PC-3 (cell line): ENCODE measurements at regions of chr3 and their contacts with region 1.

Region 1: DNA sequence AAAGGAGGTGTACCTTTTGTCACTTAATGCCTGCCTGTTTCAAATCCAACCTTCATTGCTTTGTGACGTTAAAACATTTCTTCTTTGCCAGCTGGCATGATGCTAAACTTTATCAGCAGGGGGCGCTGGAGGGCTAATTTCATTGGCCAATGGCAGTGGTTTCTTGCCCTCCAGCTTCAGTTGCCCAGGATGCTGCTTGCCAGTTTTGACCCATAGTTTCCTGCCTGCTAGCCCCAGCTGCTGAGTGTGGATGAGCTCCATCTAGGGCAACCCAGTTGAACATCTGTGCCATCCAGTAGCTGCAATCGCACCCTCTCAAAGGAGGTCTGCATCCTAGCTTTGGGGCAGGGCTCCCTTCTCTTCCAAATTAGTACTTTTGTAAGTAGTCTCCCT is 22.1 kb downstream of the ACKR2 start:
- DNase-seq: peak; percentile 85
- ATAC-seq: no peak; the same call in 1 of the 2 replicates
- H3K4me3 ChIP-seq: no peak overlapping the region
- H3K27ac ChIP-seq: no peak overlapping the region
- H3K4me1 ChIP-seq: peaks cover 43% of the 10 kb centered on the region
- H3K27me3 ChIP-seq: no peaks in the 10 kb centered on the region
- CTCF ChIP-seq: peak; percentile 91

Region 2: GRCh38 chr3:42652611-42653302 is 178.6 kb before region 1 on chr3:
- CTCF ChIA-PET with region 1: interaction called, 3 read pairs
- POLR2A ChIA-PET with region 1: no interaction called
- intact Hi-C with region 1: loop called (anchors 2 kb)
- DNase-seq: peak; percentile 90
- ATAC-seq: peak; percentile 75
- H3K4me3 ChIP-seq: peak overlapping the region; percentile 85
- H3K27ac ChIP-seq: peak overlapping the region; percentile 53
- H3K4me1 ChIP-seq: peaks cover 28% of the 10 kb centered on the region
- H3K27me3 ChIP-seq: no peaks in the 10 kb centered on the region
- CTCF ChIP-seq: no peak

Region 3: DNA sequence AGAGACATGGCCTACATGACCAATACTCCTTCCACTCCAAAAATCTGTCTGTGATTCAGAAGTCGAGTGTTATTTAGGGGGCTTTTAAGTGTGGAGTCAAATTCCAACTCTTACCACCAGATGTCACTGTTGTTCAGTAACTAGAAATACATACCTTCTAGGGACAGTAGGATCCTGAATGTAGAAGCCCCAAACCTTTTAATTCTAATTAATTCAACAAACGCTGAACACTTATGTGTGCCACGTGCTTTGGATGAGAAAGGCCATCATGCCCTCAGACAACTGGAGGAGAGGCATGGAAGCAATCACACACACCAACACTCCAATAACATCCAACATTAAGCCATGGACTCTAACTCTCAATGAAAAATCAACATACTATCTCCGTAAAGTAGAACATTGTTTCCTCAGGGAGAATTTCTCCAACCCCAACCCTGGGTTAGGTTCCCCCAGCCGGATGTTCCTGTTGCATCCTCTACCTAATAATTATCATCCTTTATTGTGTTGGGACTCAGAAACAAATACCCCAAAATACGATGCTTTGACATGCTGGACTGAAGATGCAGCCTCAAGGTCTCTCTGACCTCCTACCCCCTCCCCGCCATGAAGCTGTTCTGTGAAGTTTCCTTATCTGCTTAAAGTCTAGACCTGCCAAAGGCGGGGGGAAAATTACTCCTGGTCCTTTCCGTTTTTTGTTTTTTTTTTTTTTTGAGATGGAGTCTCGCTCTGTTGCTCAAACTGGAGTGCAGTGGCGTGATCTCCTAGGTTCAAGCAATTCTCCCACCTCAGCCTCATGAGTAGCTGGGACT is 50.2 kb before region 1 on chr3:
- CTCF ChIA-PET with region 1: interaction called, 15 read pairs
- POLR2A ChIA-PET with region 1: interaction called, 3 read pairs
- intact Hi-C with region 1: loop called (anchors 1 kb)
- DNase-seq: peak; percentile 92
- ATAC-seq: peak; percentile 48
- H3K4me3 ChIP-seq: no peak overlapping the region
- H3K27ac ChIP-seq: peak overlapping the region; percentile 85
- H3K4me1 ChIP-seq: peaks cover 40% of the 10 kb centered on the region
- H3K27me3 ChIP-seq: no peaks in the 10 kb centered on the region
- CTCF ChIP-seq: peak; percentile 93

Region 4: GRCh38 chr3:42819351-42819965 is 11.9 kb before region 1 on chr3:
- CTCF ChIA-PET with region 1: interaction called, 5 read pairs
- POLR2A ChIA-PET with region 1: interaction called, 11 read pairs
- intact Hi-C with region 1: loop called (anchors 1 kb)
- DNase-seq: peak; percentile 59
- ATAC-seq: peak; percentile 21
- H3K4me3 ChIP-seq: peak overlapping the region; percentile 32
- H3K27ac ChIP-seq: peak overlapping the region; percentile 99
- H3K4me1 ChIP-seq: peaks cover 59% of the 10 kb centered on the region
- H3K27me3 ChIP-seq: no peaks in the 10 kb centered on the region
- CTCF ChIP-seq: no peak; the same call in 1 of the 2 replicates

Region 5: DNA sequence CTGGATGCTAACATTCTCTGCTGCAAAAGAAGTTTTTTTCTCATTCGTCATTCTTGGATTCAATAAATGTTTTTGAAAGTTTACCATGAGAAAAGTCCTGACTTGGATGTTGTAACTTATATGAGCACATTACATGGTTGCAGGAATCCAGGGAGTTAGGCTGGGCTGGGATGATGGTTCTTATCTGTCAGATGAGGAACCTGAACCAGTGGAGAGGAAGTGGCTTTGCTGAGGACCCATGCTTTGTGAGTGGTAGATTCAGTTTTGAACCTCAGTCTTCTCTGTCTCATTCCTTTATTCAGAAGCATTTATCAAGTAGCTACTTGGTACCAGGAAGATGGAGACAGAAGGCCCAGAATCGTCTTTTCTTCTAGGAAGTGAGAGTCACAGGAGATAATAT is 144.1 kb after region 1 on chr3:
- CTCF ChIA-PET with region 1: no interaction called
- POLR2A ChIA-PET with region 1: no interaction called
- intact Hi-C with region 1: no loop called
- DNase-seq: no peak
- ATAC-seq: no peak
- H3K4me3 ChIP-seq: no peak overlapping the region
- H3K27ac ChIP-seq: no peak overlapping the region
- H3K4me1 ChIP-seq: peaks cover 10% of the 10 kb centered on the region
- H3K27me3 ChIP-seq: peaks cover 20% of the 10 kb centered on the region; the same call in 1 of the 2 replicates
- CTCF ChIP-seq: no peak